A549 (cell line): ENCODE measurements at regions of chr10 and their contacts with region 1.

Region 1: GRCh38 chr10:77165445-77166208 is 472.0 kb downstream of the KCNMA1 start:
- DNase-seq: peak; percentile 40 to 68
- ATAC-seq: peak; percentile 44 to 71; a peak in 5 of 6 replicates
- H3K4me3 ChIP-seq: no peak overlapping the region
- H3K27ac ChIP-seq: peak overlapping the region in 1 of 2 experiments; percentile 81; a peak in 4 of 6 replicates
- H3K4me1 ChIP-seq: peaks cover 48% of the 10 kb centered on the region
- CTCF ChIP-seq: peak; percentile 86
- EP300 ChIP-seq: no peak
- POLR2A ChIP-seq: no peak
- RAD21 ChIP-seq: peak; percentile 87 to 90

Region 2: DNA sequence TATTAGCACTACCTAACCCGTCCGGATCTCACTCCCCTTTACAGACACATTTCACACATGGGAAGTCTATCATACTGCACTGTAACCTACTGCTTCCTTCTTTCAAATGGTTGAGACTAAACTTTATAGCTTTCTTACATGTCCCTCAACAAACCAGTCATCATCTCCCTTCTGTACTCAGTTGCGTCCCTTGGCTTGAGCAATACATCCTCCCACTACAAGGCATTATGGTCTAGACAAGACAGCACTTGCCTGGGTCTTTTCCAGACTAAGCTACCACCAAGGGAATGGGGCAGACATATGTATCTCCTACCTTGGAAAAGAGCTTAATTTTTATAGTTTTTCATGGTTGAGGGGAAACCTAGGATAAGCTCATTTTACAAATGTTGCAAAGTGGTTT is 103.2 kb before region 1 on chr10:
- CTCF ChIA-PET with region 1: no interaction called
- POLR2A ChIA-PET with region 1: no interaction called
- DNase-seq: no peak
- ATAC-seq: no peak
- H3K4me3 ChIP-seq: no peak overlapping the region
- H3K27ac ChIP-seq: no peak overlapping the region
- H3K4me1 ChIP-seq: no peaks in the 10 kb centered on the region
- CTCF ChIP-seq: no peak
- EP300 ChIP-seq: no peak
- POLR2A ChIP-seq: no peak
- RAD21 ChIP-seq: no peak

Region 3: DNA sequence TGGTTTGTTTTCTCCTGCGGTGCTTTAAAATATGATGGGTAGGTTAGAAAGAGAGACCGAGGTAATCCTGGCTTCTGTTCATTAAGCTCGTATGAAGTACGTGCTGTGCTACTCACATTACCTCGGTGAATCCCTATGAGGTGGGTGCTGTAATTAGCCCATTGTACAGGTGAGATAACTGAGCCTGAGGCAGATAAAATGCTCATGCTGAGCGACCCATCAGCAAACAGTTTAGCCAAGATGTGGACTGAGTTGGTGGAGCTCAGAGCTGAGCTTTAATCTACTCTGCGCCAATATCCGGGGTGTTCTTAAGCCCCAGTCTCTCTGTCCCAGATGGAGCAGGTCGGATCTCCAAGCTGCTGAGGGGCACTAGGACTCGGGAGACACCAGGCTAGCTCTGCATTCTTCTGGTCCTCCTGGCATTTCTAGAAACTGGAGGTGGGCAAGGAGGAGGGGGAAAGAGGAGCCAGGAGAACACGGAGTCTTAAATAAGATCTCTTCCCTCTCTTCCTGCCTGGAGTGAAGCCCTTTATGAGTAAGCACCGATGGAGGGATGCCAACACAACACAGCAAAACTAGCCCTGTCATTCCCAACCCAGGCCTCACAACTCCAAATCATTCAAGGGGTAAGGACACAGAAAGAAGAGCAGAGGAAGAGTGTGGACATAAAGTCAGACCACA is 13.5 kb after region 1 on chr10:
- CTCF ChIA-PET with region 1: interaction called, 109 read pairs
- POLR2A ChIA-PET with region 1: no interaction called
- DNase-seq: peak; percentile 29 to 70
- ATAC-seq: peak; percentile 78 to 90
- H3K4me3 ChIP-seq: no peak overlapping the region
- H3K27ac ChIP-seq: peak overlapping the region; percentile 47 to 79
- H3K4me1 ChIP-seq: peaks cover 13% of the 10 kb centered on the region
- CTCF ChIP-seq: no peak
- EP300 ChIP-seq: no peak; a peak in 1 of 5 replicates
- POLR2A ChIP-seq: no peak
- RAD21 ChIP-seq: no peak

Region 4: GRCh38 chr10:77251297-77252013 is 85.8 kb after region 1 on chr10:
- CTCF ChIA-PET with region 1: interaction called, 15 read pairs
- POLR2A ChIA-PET with region 1: no interaction called
- DNase-seq: peak; percentile 63 to 64
- ATAC-seq: peak; percentile 91 to 95
- H3K4me3 ChIP-seq: no peak overlapping the region
- H3K27ac ChIP-seq: peak overlapping the region; percentile 18 to 51; a peak in 3 of 6 replicates
- H3K4me1 ChIP-seq: peaks cover 22% of the 10 kb centered on the region
- CTCF ChIP-seq: peak; percentile 83
- EP300 ChIP-seq: no peak
- POLR2A ChIP-seq: no peak
- RAD21 ChIP-seq: peak; percentile 92 to 94

Region 5: DNA sequence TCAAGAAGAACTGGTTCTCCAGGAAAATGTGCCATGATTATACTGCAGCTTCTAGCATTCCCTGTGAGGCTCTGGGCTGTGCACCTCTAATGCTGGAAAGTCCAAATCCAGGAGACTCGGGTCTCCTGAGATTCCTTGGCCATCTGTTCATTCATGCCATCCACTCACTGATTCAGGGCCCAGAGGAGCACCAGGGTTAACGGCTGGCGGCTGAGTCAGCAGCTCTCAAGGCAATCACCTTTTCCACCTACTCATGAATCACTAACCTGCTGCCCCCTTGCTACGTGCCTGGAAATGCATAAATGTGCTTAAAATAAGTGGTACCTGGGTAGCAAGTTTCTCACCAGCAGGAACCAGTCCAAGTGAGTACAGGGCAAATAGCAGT is 339.2 kb after region 1 on chr10:
- CTCF ChIA-PET with region 1: interaction called, 11 read pairs
- POLR2A ChIA-PET with region 1: no interaction called
- DNase-seq: peak; percentile 49 to 59
- ATAC-seq: peak; percentile 49 to 69; a peak in 5 of 6 replicates
- H3K4me3 ChIP-seq: no peak overlapping the region
- H3K27ac ChIP-seq: peak overlapping the region; percentile 69 to 84
- H3K4me1 ChIP-seq: peaks cover 65% of the 10 kb centered on the region
- CTCF ChIP-seq: peak; percentile 22; the same call in 2 of the 3 replicates
- EP300 ChIP-seq: peak in 1 of 2 experiments; percentile 23; a peak in 1 of 5 replicates
- POLR2A ChIP-seq: no peak
- RAD21 ChIP-seq: peak in 1 of 2 experiments; percentile 36; a peak in 3 of 5 replicates

Region 6: DNA sequence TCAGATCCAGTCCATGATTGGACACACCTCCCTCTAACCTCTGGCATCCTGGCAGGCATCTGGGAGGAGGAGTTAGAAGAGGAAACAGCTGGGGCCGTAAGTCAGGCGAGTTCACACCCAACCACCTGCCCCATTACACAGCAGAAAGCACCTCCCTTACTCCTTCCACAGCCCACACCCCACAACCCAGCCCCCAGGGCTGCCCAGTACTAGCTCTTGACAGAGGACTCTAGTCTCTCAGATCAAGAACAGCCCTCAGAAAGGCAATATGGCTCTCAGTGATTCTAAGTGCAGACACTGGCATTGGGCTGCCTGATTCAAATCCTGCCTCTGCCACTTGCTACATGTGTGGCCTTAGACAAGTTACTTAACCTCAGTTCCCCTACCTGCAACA is 437.9 kb after region 1 on chr10:
- CTCF ChIA-PET with region 1: interaction called, 13 read pairs
- POLR2A ChIA-PET with region 1: no interaction called
- DNase-seq: peak in 1 of 2 experiments; percentile 30
- ATAC-seq: peak; percentile 8 to 44; a peak in 3 of 6 replicates
- H3K4me3 ChIP-seq: no peak overlapping the region
- H3K27ac ChIP-seq: peak overlapping the region; percentile 56 to 78; a peak in 5 of 6 replicates
- H3K4me1 ChIP-seq: peaks cover 47% of the 10 kb centered on the region
- CTCF ChIP-seq: no peak
- EP300 ChIP-seq: no peak
- POLR2A ChIP-seq: no peak
- RAD21 ChIP-seq: no peak